B cell (primary cell): ENCODE measurements at regions of chr20 and their contacts with region 1.

Region 1: GRCh38 chr20:32762149-32762753 is at the start of gene DNMT3B:
- DNase-seq: peak; percentile 80
- ATAC-seq: peak; percentile 86
- H3K4me3 ChIP-seq: peak within 1 kb of the TSS; percentile 44 to 74 (median 68)
- H3K4me3 Mint-ChIP-seq: peak within 1 kb of the TSS; percentile 90
- H3K27ac ChIP-seq: no peak within 1 kb of the TSS
- H3K27ac Mint-ChIP-seq: peak within 1 kb of the TSS; percentile 67
- H3K4me1 ChIP-seq: peaks cover 21 to 22% of the 10 kb centered on the region in 2 donors
- H3K4me1 Mint-ChIP-seq: peaks cover 24% of the 10 kb centered on the region
- H3K27me3 ChIP-seq: peaks cover 0 to 21% (median 7%) of the 10 kb centered on the region in 4 experiments
- H3K27me3 Mint-ChIP-seq: no peaks in the 10 kb centered on the region
- CTCF ChIP-seq: no peak
- total RNA-seq, gene DNMT3B: 0.36 and 0.47 TPM in 2 replicates

Region 2: GRCh38 chr20:32484958-32485769 is 277.1 kb before region 1 on chr20:
- CTCF ChIA-PET with region 1: no interaction called
- POLR2A ChIA-PET with region 1: no interaction called
- intact Hi-C with region 1: loop called (anchors 10 kb)
- DNase-seq: peak; percentile 80
- ATAC-seq: peak; percentile 82
- H3K4me3 ChIP-seq: peak overlapping the region; percentile 45 to 69 (median 61)
- H3K4me3 Mint-ChIP-seq: peak overlapping the region; percentile 97
- H3K27ac ChIP-seq: no peak overlapping the region
- H3K27ac Mint-ChIP-seq: peak overlapping the region; percentile 89
- H3K4me1 ChIP-seq: peaks cover 14 to 23% of the 10 kb centered on the region in 2 donors
- H3K4me1 Mint-ChIP-seq: peaks cover 14% of the 10 kb centered on the region
- H3K27me3 ChIP-seq: peaks cover 0 to 10% (median 2%) of the 10 kb centered on the region in 4 experiments
- H3K27me3 Mint-ChIP-seq: peaks cover 5% of the 10 kb centered on the region
- CTCF ChIP-seq: peak; percentile 81

Region 3: GRCh38 chr20:32560989-32561830 is 201.0 kb before region 1 on chr20:
- CTCF ChIA-PET with region 1: no interaction called
- POLR2A ChIA-PET with region 1: no interaction called
- intact Hi-C with region 1: no loop called
- DNase-seq: no peak
- ATAC-seq: peak; percentile 21
- H3K4me3 ChIP-seq: no peak overlapping the region
- H3K4me3 Mint-ChIP-seq: no peak overlapping the region
- H3K27ac ChIP-seq: no peak overlapping the region
- H3K27ac Mint-ChIP-seq: no peak overlapping the region
- H3K4me1 ChIP-seq: peaks cover 4 to 7% of the 10 kb centered on the region in 2 donors
- H3K4me1 Mint-ChIP-seq: peaks cover 8% of the 10 kb centered on the region
- H3K27me3 ChIP-seq: peaks cover 0 to 37% (median under 1%) of the 10 kb centered on the region in 4 experiments
- H3K27me3 Mint-ChIP-seq: peaks cover 10% of the 10 kb centered on the region
- CTCF ChIP-seq: no peak

Region 4: GRCh38 chr20:32743237-32744112 is 18.8 kb before region 1 on chr20 and contains the start of gene COMMD7:
- CTCF ChIA-PET with region 1: interaction called, 12 read pairs
- POLR2A ChIA-PET with region 1: interaction called, 12 read pairs
- intact Hi-C with region 1: loop called (anchors 1 kb)
- DNase-seq: peak; percentile 83
- ATAC-seq: peak; percentile 79
- H3K4me3 ChIP-seq: peak within 1 kb of the TSS; percentile 59 to 94 (median 79)
- H3K4me3 Mint-ChIP-seq: peak within 1 kb of the TSS; percentile 99
- H3K27ac ChIP-seq: peak within 1 kb of the TSS; percentile 66 to 88
- H3K27ac Mint-ChIP-seq: peak within 1 kb of the TSS; percentile 98
- H3K4me1 ChIP-seq: peaks cover 13 to 18% of the 10 kb centered on the region in 2 donors
- H3K4me1 Mint-ChIP-seq: peaks cover 27% of the 10 kb centered on the region
- H3K27me3 ChIP-seq: no peaks in the 10 kb centered on the region
- H3K27me3 Mint-ChIP-seq: no peaks in the 10 kb centered on the region
- CTCF ChIP-seq: no peak
- total RNA-seq, gene COMMD7: 24.5 and 29.5 TPM in 2 replicates

Region 5: DNA sequence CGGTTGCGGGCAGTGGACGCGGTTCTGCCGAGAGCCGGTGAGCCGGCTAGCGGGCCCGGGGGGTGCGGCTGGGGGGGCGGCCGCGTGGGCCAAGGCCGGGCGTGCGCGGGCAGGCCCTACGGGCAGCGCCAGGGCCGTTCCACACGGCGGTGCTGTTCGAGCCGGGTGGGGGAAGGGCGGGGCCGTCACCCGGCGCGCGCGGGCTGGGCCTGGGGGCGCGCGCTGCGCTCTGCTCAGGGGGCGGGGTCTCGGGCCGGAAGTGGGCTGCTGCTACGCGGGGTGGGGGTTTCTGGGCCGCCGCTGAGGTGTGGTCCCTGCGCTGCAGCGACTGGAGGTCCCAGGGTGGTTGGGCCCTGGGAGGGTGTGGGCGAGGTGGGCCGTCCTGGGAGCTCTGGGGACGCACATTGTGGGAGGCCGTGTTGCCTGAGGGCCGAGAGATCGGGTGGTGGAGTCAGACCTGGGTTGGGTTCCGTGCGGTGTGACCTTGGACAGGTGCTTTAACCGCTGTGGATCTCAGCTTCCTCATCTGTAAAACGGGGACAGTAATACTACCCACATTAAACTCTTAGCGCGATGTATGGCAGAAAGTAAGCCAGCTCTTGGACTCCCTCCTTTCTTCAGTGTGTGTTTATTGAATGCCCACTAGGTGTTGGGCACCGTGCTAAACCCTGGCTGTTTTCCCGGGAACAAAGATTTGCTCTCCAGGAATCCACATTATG is 57.9 kb after region 1 on chr20:
- CTCF ChIA-PET with region 1: no interaction called
- POLR2A ChIA-PET with region 1: no interaction called
- intact Hi-C with region 1: loop called (anchors 1 kb)
- DNase-seq: peak; percentile 93
- ATAC-seq: peak; percentile 72
- H3K4me3 ChIP-seq: peak overlapping the region; percentile 66 to 92 (median 77)
- H3K4me3 Mint-ChIP-seq: peak overlapping the region; percentile 98
- H3K27ac ChIP-seq: peak overlapping the region; percentile 89 to 93
- H3K27ac Mint-ChIP-seq: peak overlapping the region; percentile 98
- H3K4me1 ChIP-seq: peaks cover 21% of the 10 kb centered on the region in 2 donors
- H3K4me1 Mint-ChIP-seq: peaks cover 39% of the 10 kb centered on the region
- H3K27me3 ChIP-seq: no peaks in the 10 kb centered on the region
- H3K27me3 Mint-ChIP-seq: no peaks in the 10 kb centered on the region
- CTCF ChIP-seq: no peak

Region 6: GRCh38 chr20:32930181-32930580 is 167.9 kb after region 1 on chr20:
- CTCF ChIA-PET with region 1: no interaction called
- POLR2A ChIA-PET with region 1: no interaction called
- intact Hi-C with region 1: no loop called
- DNase-seq: no peak
- ATAC-seq: no peak
- H3K4me3 ChIP-seq: no peak overlapping the region
- H3K4me3 Mint-ChIP-seq: no peak overlapping the region
- H3K27ac ChIP-seq: no peak overlapping the region
- H3K27ac Mint-ChIP-seq: no peak overlapping the region
- H3K4me1 ChIP-seq: no peaks in the 10 kb centered on the region
- H3K4me1 Mint-ChIP-seq: no peaks in the 10 kb centered on the region
- H3K27me3 ChIP-seq: no peaks in the 10 kb centered on the region
- H3K27me3 Mint-ChIP-seq: peaks cover 6% of the 10 kb centered on the region
- CTCF ChIP-seq: no peak